H1 (cell line): ENCODE measurements at regions of chr20 and their contacts with region 1.

Region 1: GRCh38 chr20:46411637-46412036 is 5.2 kb upstream of the ELMO2 start:
- DNase-seq: no peak
- H3K4me3 ChIP-seq: no peak overlapping the region
- H3K27ac ChIP-seq: no peak overlapping the region
- H3K4me1 ChIP-seq: peaks cover 0 to 7% (median 2%) of the 10 kb centered on the region in 4 experiments; a peak in 4 of 7 replicates
- H3K27me3 ChIP-seq: peaks cover 0 to 5% (median 0%) of the 10 kb centered on the region in 4 experiments; a peak in 2 of 7 replicates
- CTCF ChIP-seq: no peak
- EP300 ChIP-seq: no peak
- POLR2A ChIP-seq: no peak
- RAD21 ChIP-seq: no peak

Region 2: GRCh38 chr20:46243707-46244628 is 167.7 kb before region 1 on chr20:
- CTCF ChIA-PET with region 1: no interaction called
- POLR2A ChIA-PET with region 1: no interaction called
- DNase-seq: no peak
- H3K4me3 ChIP-seq: no peak overlapping the region
- H3K27ac ChIP-seq: no peak overlapping the region
- H3K4me1 ChIP-seq: peaks cover 0 to 12% (median 5%) of the 10 kb centered on the region in 4 experiments; a peak in 5 of 7 replicates
- H3K27me3 ChIP-seq: peaks cover 0 to 2% (median 1%) of the 10 kb centered on the region in 4 experiments; a peak in 1 of 7 replicates
- CTCF ChIP-seq: no peak
- EP300 ChIP-seq: no peak
- POLR2A ChIP-seq: no peak
- RAD21 ChIP-seq: no peak

Region 3: GRCh38 chr20:46423882-46424482 is 12.3 kb after region 1 on chr20:
- CTCF ChIA-PET with region 1: interaction called, 12 read pairs
- POLR2A ChIA-PET with region 1: interaction called, 3 read pairs
- DNase-seq: no peak
- H3K4me3 ChIP-seq: no peak overlapping the region
- H3K27ac ChIP-seq: no peak overlapping the region
- H3K4me1 ChIP-seq: peaks cover 5 to 17% (median 10%) of the 10 kb centered on the region in 4 experiments; a peak in 6 of 7 replicates
- H3K27me3 ChIP-seq: no peaks in the 10 kb centered on the region
- CTCF ChIP-seq: no peak
- EP300 ChIP-seq: no peak
- POLR2A ChIP-seq: no peak
- RAD21 ChIP-seq: no peak